IMR-90 (cell line): ENCODE measurements at regions of chr10 and their contacts with region 1.

Region 1: DNA sequence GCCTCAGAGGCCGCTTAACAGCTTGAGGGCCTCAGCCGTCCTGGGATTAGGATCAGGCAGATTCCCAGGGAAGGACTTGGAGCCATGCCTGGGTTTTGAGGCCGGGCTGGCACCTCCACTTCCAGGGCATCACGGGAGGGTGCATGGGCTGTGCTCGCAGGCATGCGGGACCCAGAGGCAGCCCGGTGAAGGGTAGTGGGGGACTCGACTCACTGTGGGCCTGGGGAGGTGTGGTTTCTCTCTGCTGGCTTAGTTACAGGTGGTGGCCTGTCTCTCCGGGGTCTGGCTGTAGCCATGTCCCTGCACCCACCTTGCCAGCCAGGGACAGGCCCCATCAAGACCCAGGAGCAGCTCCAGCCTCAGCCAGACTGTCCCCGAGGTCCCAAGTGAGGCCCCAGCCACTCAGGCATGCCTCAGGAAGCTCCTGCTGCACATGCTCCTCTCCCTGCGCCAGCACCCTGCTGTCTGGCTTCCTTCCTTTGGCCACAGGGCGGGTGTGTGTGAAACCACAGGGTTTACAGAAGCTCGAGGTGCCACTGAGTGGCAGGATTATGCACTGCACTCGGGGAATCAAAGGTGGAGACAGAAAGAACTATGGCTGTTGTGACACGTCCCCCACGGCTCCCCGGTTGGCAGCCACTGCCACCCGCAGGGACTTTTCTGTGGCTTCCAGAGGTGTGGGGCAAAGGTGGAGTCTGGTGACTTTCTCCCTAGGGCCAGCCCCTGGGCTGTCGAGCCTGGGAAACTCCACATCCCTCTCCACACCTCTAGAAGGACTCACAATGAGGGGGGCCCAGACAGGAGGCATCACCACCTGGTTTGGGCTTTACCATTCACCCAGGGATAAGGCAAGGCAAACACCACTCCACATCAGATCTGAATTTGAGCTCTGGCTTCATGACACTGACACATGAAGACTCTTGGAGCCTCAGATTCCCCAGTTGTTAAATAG is 19.7 kb downstream of the GOLGA7B start:
- DNase-seq: peak; percentile 67
- ATAC-seq: peak; percentile 96
- H3K4me3 ChIP-seq: no peak overlapping the region
- H3K27ac ChIP-seq: no peak overlapping the region
- H3K4me1 ChIP-seq: no peaks in the 10 kb centered on the region
- H3K27me3 ChIP-seq: peaks cover 45% of the 10 kb centered on the region
- CTCF ChIP-seq: peak; percentile 67
- POLR2A ChIP-seq: no peak
- RAD21 ChIP-seq: peak; percentile 83

Region 2: GRCh38 chr10:97334370-97335175 is 534.8 kb before region 1 on chr10 and contains the start of gene FRAT2:
- CTCF ChIA-PET with region 1: no interaction called
- POLR2A ChIA-PET with region 1: no interaction called
- dilution Hi-C with region 1: no loop called
- in situ Hi-C with region 1: no loop called
- intact Hi-C with region 1: no loop called
- DNase-seq: peak; percentile 91
- ATAC-seq: peak; percentile 90
- H3K4me3 ChIP-seq: peak within 1 kb of the TSS; percentile 72
- H3K27ac ChIP-seq: peak within 1 kb of the TSS; percentile 99
- H3K4me1 ChIP-seq: peaks cover 11% of the 10 kb centered on the region
- H3K27me3 ChIP-seq: peaks cover 19% of the 10 kb centered on the region
- CTCF ChIP-seq: no peak
- POLR2A ChIP-seq: peak; percentile 73
- RAD21 ChIP-seq: no peak
- total RNA-seq, gene FRAT2: 2.5 and 2.8 TPM in 2 replicates

Region 3: DNA sequence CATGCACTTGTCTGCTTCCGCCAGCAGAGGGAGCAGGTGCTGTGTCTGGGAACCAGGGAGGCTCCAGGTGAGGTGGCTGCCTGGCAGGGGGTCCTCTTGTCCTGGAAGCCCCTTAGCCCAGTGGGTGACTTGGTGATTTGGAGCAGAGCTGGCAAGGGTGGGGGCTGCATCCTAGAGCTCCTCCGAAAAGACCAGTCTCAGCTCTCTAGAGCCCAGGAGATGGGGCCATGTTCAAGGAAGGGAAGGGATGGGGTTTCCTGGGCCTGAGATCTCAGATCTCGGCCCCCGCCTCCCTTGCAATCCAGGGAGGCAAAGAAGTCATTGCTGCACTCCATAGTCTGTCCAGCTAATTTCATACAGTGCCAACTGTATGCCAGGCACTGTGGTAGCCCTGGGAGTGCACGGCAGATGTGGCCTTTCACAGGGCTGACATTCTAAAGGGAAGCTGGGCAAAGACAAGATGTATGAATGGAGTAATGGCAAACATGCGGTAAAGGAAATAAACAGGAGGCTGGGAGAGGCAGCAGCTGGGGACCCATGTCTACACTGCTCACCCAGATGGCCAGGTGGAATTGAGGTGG is 77.1 kb before region 1 on chr10:
- CTCF ChIA-PET with region 1: interaction called, 12 read pairs
- POLR2A ChIA-PET with region 1: no interaction called
- dilution Hi-C with region 1: no loop called
- in situ Hi-C with region 1: no loop called
- intact Hi-C with region 1: loop called (anchors 1 kb)
- DNase-seq: peak; percentile 46
- ATAC-seq: peak; percentile 96
- H3K4me3 ChIP-seq: no peak overlapping the region
- H3K27ac ChIP-seq: no peak overlapping the region
- H3K4me1 ChIP-seq: no peaks in the 10 kb centered on the region
- H3K27me3 ChIP-seq: peaks cover 18% of the 10 kb centered on the region
- CTCF ChIP-seq: peak; percentile 75
- POLR2A ChIP-seq: no peak
- RAD21 ChIP-seq: peak; percentile 73